ENCODE measurements at regions of chr1 and their contacts with region 1.

Region 1: DNA sequence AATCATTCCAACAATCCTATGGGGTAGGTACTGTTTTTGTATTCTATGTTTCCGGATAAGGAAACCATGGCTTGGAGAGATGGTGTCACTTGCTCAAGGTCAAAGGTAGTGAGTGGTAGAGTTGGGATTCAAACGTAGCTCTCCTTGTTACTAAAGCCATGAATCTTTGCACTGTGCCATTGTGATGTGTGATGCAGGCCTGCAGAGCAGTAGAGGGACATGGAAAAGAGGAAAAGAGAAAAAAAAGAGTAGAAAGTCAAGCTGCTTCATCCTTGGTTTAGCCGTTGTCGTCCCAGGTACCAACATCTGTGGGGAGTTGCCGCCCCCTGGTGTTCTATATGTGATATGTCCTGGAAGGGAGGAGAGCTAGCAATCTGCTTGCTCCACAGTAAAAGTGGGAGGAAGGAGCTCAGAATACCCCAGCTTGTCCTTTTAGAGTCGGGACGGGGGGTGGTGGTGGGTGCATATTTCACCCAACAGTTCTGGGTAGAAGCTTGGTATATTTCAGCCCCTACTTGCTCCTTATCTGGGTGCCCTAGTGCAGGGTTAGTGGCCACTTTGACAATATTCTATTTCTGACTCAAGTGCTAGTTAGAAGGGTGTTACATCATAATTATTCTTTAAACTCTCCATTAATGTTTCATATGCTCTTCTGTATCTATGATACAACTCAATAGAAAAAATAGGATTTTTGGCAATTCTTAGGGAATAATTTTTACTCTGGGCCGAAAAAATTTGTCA is 98.4 kb downstream of the EBNA1BP2 start:
- DNase-seq: peak; percentile 72
- ATAC-seq: peak; percentile 87
- H3K4me3 ChIP-seq: peak overlapping the region in 1 of 3 experiments; percentile 10; a peak in 1 of 6 replicates
- H3K27ac ChIP-seq: no peak overlapping the region
- H3K4me1 ChIP-seq: peaks cover 53% of the 10 kb centered on the region
- H3K27me3 ChIP-seq: 0 out of 5 replicates have a peak, but pooled peaks cover 0 to 2% of the 10 kb centered on the region in 2 experiments
- CTCF ChIP-seq: peak; percentile 92
- EP300 ChIP-seq: no peak
- POLR2A ChIP-seq: no peak
- RAD21 ChIP-seq: peak; percentile 97

Region 2: DNA sequence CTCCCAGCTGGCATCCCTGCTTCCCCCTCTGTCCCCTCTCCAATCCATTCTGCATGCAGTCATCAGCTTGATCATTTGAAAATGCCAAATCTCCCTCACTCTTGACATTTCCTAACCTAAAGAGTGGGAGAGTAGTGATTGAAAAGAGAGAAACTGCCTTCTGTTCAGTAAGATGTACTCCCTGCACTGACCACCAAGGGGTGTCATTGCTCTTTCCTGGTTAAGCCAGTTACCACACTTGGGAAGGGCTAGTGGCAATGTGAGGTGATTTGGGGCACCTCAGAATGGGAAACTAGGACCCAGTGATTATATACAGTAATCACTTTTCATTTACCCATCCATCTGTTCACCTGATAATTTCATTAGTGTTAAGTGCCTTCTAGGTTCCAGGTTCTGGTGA is 295.8 kb before region 1 on chr1:
- CTCF ChIA-PET with region 1: interaction called, 14 read pairs
- POLR2A ChIA-PET with region 1: no interaction called
- in situ Hi-C with region 1: loop called (anchors 5 kb)
- intact Hi-C with region 1: loop called (anchors 5 kb)
- DNase-seq: peak; percentile 40
- ATAC-seq: peak; percentile 82
- H3K4me3 ChIP-seq: no peak overlapping the region
- H3K27ac ChIP-seq: no peak overlapping the region
- H3K4me1 ChIP-seq: peaks cover 12% of the 10 kb centered on the region; the same call in 1 of the 2 replicates
- H3K27me3 ChIP-seq: no peaks in the 10 kb centered on the region
- CTCF ChIP-seq: peak; percentile 81
- EP300 ChIP-seq: no peak
- POLR2A ChIP-seq: no peak
- RAD21 ChIP-seq: peak; percentile 77

Region 3: DNA sequence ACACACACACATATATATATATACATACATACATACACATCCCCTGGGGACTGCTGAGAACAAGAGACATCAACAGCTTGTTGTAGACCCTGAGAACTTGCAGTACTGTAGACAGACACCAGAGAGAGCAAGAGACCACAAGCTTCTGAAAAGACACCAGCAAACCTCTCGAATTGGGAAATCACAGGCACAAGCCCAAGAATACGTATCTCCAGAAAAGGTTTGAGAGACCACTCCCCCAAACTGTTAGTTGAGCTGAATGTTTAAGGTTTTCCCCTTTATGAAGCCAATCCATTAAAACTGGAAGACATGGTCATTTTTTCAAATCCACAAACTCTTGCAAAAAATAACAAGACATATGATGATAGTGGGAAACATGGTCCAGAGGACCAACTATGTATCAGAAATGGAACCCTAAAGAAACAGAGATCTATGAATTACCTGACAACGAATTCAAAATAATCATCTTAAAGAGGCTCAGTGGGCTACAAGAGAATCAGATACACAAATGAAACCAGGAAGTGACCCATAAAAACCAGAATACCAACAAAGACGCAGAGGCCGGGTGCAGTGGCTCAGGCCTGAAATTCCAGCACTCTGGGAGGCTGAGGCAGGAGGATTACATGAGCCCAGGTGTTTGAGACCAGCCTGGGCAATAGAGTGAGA is 160.1 kb before region 1 on chr1:
- CTCF ChIA-PET with region 1: interaction called, 115 read pairs
- POLR2A ChIA-PET with region 1: interaction called, 3 read pairs
- in situ Hi-C with region 1: loop called (anchors 5 kb)
- intact Hi-C with region 1: loop called (anchors 1 kb)
- DNase-seq: peak; percentile 84
- ATAC-seq: peak; percentile 74
- H3K4me3 ChIP-seq: no peak overlapping the region
- H3K27ac ChIP-seq: no peak overlapping the region
- H3K4me1 ChIP-seq: no peaks in the 10 kb centered on the region
- H3K27me3 ChIP-seq: no peaks in the 10 kb centered on the region; a peak in 1 of 5 replicates
- CTCF ChIP-seq: peak; percentile 85
- EP300 ChIP-seq: no peak
- POLR2A ChIP-seq: no peak
- RAD21 ChIP-seq: peak; percentile 88

Region 4: GRCh38 chr1:42924082-42924850 is 149.4 kb before region 1 on chr1:
- CTCF ChIA-PET with region 1: interaction called, 31 read pairs
- POLR2A ChIA-PET with region 1: interaction called, 18 read pairs
- in situ Hi-C with region 1: no loop called
- intact Hi-C with region 1: no loop called
- DNase-seq: peak; percentile 86
- ATAC-seq: peak; percentile 93
- H3K4me3 ChIP-seq: peak overlapping the region; percentile 46 to 74 (median 55)
- H3K27ac ChIP-seq: no peak overlapping the region
- H3K4me1 ChIP-seq: peaks cover 53% of the 10 kb centered on the region
- H3K27me3 ChIP-seq: no peaks in the 10 kb centered on the region
- CTCF ChIP-seq: peak; percentile 58
- EP300 ChIP-seq: no peak
- POLR2A ChIP-seq: peak; percentile 21 to 81; a peak in 2 of 4 replicates
- RAD21 ChIP-seq: peak; percentile 42; the same call in 1 of the 2 replicates

Region 5: DNA sequence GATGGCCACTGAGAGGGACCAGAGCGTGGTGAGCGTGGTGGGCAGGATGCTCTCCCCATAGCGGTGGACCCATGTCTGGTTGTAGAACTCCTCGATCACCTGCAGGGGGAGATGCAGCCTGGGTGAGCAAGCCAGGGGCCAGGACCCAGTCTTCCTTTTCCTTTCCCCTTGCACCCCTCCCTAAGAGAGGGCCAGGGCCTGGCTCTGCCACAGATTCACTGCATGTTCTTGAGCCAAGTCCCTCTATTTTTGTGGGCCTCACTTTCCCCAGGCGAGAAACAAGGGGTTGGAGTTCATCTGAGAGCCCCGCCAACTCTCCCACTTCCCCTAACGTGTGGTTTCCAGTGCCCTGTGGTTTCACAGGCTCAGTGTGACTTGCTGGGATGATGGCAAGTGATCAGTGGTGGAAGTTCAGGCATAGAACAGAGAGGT is 142.5 kb before region 1 on chr1:
- CTCF ChIA-PET with region 1: interaction called, 28 read pairs
- POLR2A ChIA-PET with region 1: interaction called, 3 read pairs
- in situ Hi-C with region 1: no loop called
- intact Hi-C with region 1: loop called (anchors 1 kb)
- DNase-seq: no peak
- ATAC-seq: peak; percentile 59
- H3K4me3 ChIP-seq: no peak overlapping the region
- H3K27ac ChIP-seq: no peak overlapping the region
- H3K4me1 ChIP-seq: peaks cover 73% of the 10 kb centered on the region; the same call in 1 of the 2 replicates
- H3K27me3 ChIP-seq: no peaks in the 10 kb centered on the region
- CTCF ChIP-seq: peak; percentile 68
- EP300 ChIP-seq: no peak
- POLR2A ChIP-seq: no peak
- RAD21 ChIP-seq: peak; percentile 61

Region 6: GRCh38 chr1:42958488-42959319 is 115.0 kb before region 1 on chr1 and contains the start of gene SLC2A1:
- CTCF ChIA-PET with region 1: interaction called, 3 read pairs
- POLR2A ChIA-PET with region 1: no interaction called
- in situ Hi-C with region 1: loop called (anchors 5 kb)
- intact Hi-C with region 1: loop called (anchors 2 kb)
- DNase-seq: peak; percentile 92
- ATAC-seq: peak; percentile 87
- H3K4me3 ChIP-seq: peak within 1 kb of the TSS; percentile 93 to 97 (median 97)
- H3K27ac ChIP-seq: peak within 1 kb of the TSS; percentile 80
- H3K4me1 ChIP-seq: peaks cover 68% of the 10 kb centered on the region
- H3K27me3 ChIP-seq: no peaks in the 10 kb centered on the region; a peak in 1 of 5 replicates
- CTCF ChIP-seq: no peak
- EP300 ChIP-seq: no peak
- POLR2A ChIP-seq: peak; percentile 95 to 99
- RAD21 ChIP-seq: peak; percentile 37; the same call in 1 of the 2 replicates
- total RNA-seq, gene SLC2A1: 54.3 and 125 TPM in 2 replicates

Region 7: GRCh38 chr1:42971841-42972291 is 101.8 kb before region 1 on chr1:
- CTCF ChIA-PET with region 1: no interaction called
- POLR2A ChIA-PET with region 1: no interaction called
- in situ Hi-C with region 1: no loop called
- intact Hi-C with region 1: no loop called
- DNase-seq: no peak
- ATAC-seq: no peak
- H3K4me3 ChIP-seq: no peak overlapping the region
- H3K27ac ChIP-seq: no peak overlapping the region
- H3K4me1 ChIP-seq: peaks cover 14% of the 10 kb centered on the region
- H3K27me3 ChIP-seq: no peaks in the 10 kb centered on the region
- CTCF ChIP-seq: no peak
- EP300 ChIP-seq: no peak
- POLR2A ChIP-seq: no peak
- RAD21 ChIP-seq: no peak

Region 8: GRCh38 chr1:43035821-43036741 is 37.6 kb before region 1 on chr1:
- CTCF ChIA-PET with region 1: no interaction called
- POLR2A ChIA-PET with region 1: interaction called, 7 read pairs
- in situ Hi-C with region 1: no loop called
- intact Hi-C with region 1: loop called (anchors 2 kb)
- DNase-seq: peak; percentile 93
- ATAC-seq: peak; percentile 75
- H3K4me3 ChIP-seq: peak overlapping the region in 2 of 3 experiments; percentile 44 to 68; a peak in 5 of 6 replicates
- H3K27ac ChIP-seq: peak overlapping the region; percentile 91
- H3K4me1 ChIP-seq: peaks cover 93% of the 10 kb centered on the region
- H3K27me3 ChIP-seq: no peaks in the 10 kb centered on the region
- CTCF ChIP-seq: peak; percentile 31; the same call in 1 of the 2 replicates
- EP300 ChIP-seq: peak in 1 of 2 experiments; percentile 96; a peak in 3 of 4 replicates
- POLR2A ChIP-seq: peak in 1 of 2 experiments; percentile 49; a peak in 2 of 4 replicates
- RAD21 ChIP-seq: no peak

Measured in HepG2 (cell line).